AG04449 (cell line): ENCODE measurements at regions of chr19 and their contacts with region 1.

Region 1: DNA sequence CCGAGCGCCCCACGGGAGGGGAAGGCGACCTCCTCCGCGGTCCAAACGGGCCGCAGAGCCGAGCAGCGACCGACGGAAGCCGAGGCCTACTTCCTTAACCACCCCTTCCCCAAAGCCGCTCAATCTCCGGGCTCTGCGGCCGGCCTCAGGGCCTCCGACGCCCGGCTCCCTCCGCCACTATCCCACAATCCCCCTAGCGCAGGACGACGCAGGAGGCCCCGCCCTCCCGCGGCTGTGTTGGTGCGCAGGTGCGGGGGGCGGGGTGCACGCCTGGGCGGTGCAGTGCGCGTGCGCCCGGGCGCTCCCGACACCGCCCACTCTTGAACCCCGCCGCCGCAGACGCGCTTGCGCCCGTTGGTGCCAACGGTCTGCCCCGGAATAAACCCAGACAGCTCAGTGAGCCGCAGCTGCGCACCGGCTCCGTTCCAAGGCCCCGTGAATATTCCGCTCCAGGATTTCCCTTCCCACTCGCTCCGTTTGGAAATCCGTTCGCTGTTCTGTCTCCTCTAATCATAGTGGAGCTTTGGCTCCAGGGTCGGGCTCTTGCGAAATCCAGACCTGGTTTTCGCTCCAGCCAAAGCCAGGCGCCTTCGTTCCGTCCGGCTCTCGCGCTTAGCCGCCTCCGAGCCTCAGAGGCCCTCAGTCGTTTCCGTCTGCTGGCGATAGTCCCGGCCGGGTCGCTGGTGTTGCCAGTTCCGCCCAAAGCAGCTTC is at the start of gene PPP6R1:
- DNase-seq: peak; percentile 97
- H3K4me3 ChIP-seq: peak within 1 kb of the TSS; percentile 92
- CTCF ChIP-seq: no peak

Region 2: DNA sequence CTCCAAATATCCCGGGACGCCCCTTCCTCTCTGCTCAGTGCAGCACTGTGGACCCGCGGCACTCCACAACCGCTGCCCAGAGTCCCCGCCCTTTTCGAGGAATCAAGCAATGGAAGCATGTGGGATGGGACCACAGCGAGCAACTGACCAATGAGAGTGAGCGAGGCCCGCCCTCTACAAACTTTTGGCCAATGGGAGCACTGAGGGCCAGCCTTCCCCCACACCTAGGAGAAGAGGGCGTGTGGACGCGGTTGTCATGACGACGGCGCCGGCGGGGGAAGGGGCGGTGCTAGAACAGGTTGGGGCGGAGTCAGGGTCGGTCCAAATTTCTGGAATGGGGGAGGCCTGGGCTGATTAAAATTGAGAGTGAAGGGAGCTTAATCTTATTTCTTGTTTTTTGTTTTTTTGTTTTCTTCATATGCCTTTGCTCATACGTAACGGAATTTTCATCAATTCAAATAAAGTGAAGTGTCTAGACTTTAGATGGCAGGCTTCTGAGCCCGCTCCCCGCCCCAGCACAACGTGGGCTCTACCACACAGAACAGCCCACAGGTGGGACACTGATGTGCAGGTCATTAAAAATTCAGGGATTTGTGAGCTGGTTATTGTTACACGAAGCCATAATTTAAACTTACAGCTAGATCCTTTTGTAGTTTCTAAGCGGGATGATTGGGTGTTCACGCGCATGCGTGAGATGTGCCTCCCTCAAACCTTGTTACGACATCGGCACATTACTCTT is 92.3 kb before region 1 on chr19 and contains the start of gene DNAAF3:
- CTCF ChIA-PET with region 1: no interaction called
- POLR2A ChIA-PET with region 1: no interaction called
- DNase-seq: peak; percentile 81
- H3K4me3 ChIP-seq: peak within 1 kb of the TSS; percentile 65
- CTCF ChIP-seq: no peak

Region 3: DNA sequence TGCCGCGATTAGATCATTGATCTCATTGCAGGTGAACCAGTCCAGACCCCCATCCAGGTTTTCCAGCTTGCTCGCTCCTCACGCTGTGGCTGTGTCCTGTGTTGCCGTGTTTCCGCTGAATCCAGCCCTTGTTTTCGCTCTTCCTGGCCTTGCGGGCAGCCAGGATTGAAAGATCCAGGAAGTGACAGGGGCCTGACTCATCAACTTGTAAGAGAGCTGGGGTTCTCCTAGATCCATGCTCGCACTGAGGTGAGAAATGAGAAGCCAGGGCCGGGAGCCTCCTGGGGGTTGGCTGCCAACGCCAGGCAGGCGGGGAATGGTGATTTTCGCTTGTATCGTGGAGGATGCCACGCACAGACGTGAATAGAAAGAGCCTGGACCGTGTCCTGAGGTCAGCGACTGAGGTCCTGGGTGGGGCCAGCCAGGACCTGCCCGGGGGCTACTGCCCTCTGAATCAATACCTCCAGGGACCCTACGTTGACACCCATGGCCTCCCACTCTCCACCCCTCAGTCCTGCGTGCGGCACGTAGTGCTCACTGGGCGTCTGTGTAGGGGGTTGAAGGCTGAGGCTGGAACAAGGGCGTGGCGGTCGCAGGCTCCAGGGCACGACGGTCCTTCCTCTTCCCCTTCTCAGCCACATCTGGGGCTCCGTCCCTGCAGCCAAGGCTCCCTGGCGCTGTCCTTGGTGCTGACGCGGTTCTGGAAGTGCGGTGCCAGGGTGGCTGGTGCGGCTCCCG is 42.4 kb before region 1 on chr19:
- CTCF ChIA-PET with region 1: interaction called, 6 read pairs
- POLR2A ChIA-PET with region 1: interaction called, 22 read pairs
- DNase-seq: peak; percentile 97
- H3K4me3 ChIP-seq: peak overlapping the region; percentile 58
- CTCF ChIP-seq: no peak

Region 4: DNA sequence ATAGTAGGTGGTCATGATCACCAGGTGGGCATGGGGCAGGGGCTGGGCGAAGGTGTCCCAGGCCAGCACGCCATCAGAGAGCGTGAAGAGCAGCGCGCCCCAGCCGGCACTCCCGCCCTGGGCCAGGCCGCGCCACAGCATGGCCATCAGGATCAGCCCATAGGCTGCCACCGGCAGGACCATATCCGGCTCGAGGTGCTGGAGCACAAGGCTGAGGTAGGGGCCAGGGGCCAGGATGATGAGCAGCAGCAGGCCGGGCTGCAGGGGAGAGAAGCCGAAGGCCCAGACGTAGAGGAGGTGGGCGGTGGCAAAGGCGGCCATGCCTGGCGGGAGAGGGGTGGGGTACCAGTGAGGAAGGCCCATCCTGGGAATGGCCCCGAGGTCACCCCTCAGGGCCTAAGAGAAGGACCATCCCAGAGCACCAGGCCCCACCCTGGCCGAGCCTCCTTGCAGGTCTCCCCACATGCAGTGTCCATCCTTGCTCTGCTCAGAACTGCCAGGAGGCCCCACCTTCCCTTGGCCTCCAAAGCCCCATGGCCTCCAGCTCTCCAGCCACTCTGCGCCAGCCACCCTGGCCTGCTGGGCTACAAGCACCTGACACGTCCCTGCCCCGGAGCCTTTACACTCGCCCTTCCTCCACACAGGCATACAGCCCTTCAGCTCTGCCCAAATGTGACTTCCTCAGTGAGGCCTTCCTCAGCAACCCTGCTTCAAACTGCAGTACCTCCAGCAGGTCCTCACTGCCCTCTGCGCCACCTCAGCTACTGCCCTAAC is 31.6 kb before region 1 on chr19:
- CTCF ChIA-PET with region 1: no interaction called
- POLR2A ChIA-PET with region 1: no interaction called
- DNase-seq: no peak
- H3K4me3 ChIP-seq: no peak overlapping the region
- CTCF ChIP-seq: no peak

Region 5: GRCh38 chr19:55279770-55280643 is 21.0 kb after region 1 on chr19 and contains the start of gene HSPBP1:
- CTCF ChIA-PET with region 1: interaction called, 4 read pairs
- POLR2A ChIA-PET with region 1: interaction called, 12 read pairs
- DNase-seq: peak; percentile 52
- H3K4me3 ChIP-seq: peak within 1 kb of the TSS; percentile 93
- CTCF ChIP-seq: no peak

Region 6: DNA sequence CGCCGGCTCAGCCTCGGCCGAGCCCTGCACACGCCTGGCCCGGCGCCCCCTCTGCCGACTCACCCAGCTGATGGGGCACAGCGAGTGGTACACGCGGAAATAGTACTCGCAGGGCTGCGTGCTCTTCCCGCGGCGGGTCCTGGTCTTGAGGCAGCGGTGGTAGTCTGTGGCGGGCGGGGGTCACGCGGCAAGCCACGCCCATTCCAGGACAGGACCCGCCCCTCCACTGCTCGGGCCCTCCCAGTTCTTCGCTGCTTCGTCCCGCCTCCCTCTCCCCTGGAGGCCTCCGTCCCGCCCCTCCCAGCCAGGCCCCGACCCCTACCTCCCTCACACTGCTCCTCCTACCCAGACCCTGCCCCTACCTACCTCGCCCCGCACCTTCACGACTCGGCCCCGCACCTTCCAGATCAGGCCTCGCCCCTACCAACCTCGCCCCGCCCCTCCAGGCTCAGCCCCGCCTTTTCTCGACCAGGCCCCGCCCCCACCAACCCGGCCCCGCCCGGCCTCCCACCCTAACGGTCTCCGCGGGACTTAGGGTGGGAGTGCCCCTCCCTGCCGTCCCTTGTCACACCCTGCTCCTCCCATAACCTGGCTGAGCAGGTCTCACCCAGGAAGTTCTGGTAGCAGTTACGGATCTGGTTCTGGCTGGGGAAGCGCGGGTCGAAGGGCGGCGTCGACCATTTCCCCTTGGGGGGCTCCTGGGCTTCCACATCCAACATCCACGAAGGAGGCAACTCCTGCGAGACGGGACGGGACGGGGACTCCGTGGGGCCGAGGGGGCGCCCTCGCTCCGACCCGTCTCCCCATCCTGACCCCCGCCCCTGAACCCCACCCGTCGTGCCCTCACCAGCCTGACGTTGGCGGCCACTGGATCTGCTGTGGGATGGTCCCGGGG is 95.1 kb after region 1 on chr19:
- CTCF ChIA-PET with region 1: no interaction called
- POLR2A ChIA-PET with region 1: no interaction called
- DNase-seq: no peak
- H3K4me3 ChIP-seq: peak overlapping the region; percentile 59
- CTCF ChIP-seq: no peak